Naive thymus-derived CD4-positive, alpha-beta T cell (primary cell): ENCODE measurements at regions of chr1 and their contacts with region 1.

Region 1: GRCh38 chr1:101238681-101239094 is 1.9 kb downstream of the S1PR1 start:
- DNase-seq: peak; percentile 74 to 88 (median 83)
- ATAC-seq: peak; percentile 67
- H3K4me3 ChIP-seq: peak overlapping the region; percentile 88
- H3K4me3 Mint-ChIP-seq: peak overlapping the region; percentile 90 to 100 (median 98)
- H3K27ac ChIP-seq: peak overlapping the region; percentile 94
- H3K27ac Mint-ChIP-seq: peak overlapping the region; percentile 93 to 100 (median 99)
- H3K4me1 ChIP-seq: peaks cover 37 to 42% of the 10 kb centered on the region in 2 donors
- H3K4me1 Mint-ChIP-seq: peaks cover 43 to 68% (median 56%) of the 10 kb centered on the region in 7 donors
- H3K27me3 ChIP-seq: no peaks in the 10 kb centered on the region
- H3K27me3 Mint-ChIP-seq: peaks cover 0 to 4% (median 0%) of the 10 kb centered on the region in 5 donors

Region 2: GRCh38 chr1:100443811-100444571 is 794.7 kb before region 1 on chr1:
- CTCF ChIA-PET with region 1: no interaction called
- POLR2A ChIA-PET with region 1: interaction called, 3 read pairs
- intact Hi-C with region 1: loop called in 1 of 2 experiments (anchors 5 kb)
- DNase-seq: peak in 5 of 9 donors; percentile 31 to 42 (median 36)
- ATAC-seq: peak; percentile 6
- H3K4me3 ChIP-seq: peak overlapping the region; percentile 12
- H3K4me3 Mint-ChIP-seq: peak overlapping the region; percentile 66 to 86 (median 81)
- H3K27ac ChIP-seq: peak overlapping the region; percentile 93
- H3K27ac Mint-ChIP-seq: peak overlapping the region; percentile 92 to 99 (median 98)
- H3K4me1 ChIP-seq: peaks cover 83 to 84% of the 10 kb centered on the region in 2 donors
- H3K4me1 Mint-ChIP-seq: peaks cover 53 to 95% (median 87%) of the 10 kb centered on the region in 7 donors
- H3K27me3 ChIP-seq: no peaks in the 10 kb centered on the region
- H3K27me3 Mint-ChIP-seq: no peaks in the 10 kb centered on the region

Region 3: DNA sequence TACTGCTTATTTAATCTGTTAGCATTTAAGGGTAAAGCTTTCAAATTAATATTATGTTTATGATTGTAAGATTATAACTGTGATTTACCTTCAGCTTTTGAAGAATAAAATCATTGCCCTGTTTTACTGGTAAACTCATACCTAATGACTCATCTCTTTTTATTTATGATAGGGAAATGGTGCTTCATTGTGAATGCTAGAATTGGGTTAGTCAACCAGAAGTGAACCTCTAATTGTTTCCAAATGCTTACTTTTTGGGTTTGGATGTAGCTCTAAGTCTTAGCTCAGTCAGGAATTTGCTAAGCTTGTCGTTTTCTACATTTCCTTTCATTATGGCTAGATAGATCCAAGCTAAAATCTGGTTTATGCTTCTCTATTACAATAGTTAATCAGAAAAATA is 283.4 kb before region 1 on chr1:
- CTCF ChIA-PET with region 1: no interaction called
- POLR2A ChIA-PET with region 1: interaction called, 10 read pairs
- intact Hi-C with region 1: no loop called
- DNase-seq: no peak
- ATAC-seq: no peak
- H3K4me3 ChIP-seq: no peak overlapping the region
- H3K4me3 Mint-ChIP-seq: peak overlapping the region in 2 of 10 donors; percentile 18 to 22
- H3K27ac ChIP-seq: no peak overlapping the region
- H3K27ac Mint-ChIP-seq: no peak overlapping the region
- H3K4me1 ChIP-seq: peaks cover 5 to 6% of the 10 kb centered on the region in 2 donors
- H3K4me1 Mint-ChIP-seq: peaks cover 17 to 74% (median 57%) of the 10 kb centered on the region in 7 donors
- H3K27me3 ChIP-seq: no peaks in the 10 kb centered on the region
- H3K27me3 Mint-ChIP-seq: no peaks in the 10 kb centered on the region

Region 4: DNA sequence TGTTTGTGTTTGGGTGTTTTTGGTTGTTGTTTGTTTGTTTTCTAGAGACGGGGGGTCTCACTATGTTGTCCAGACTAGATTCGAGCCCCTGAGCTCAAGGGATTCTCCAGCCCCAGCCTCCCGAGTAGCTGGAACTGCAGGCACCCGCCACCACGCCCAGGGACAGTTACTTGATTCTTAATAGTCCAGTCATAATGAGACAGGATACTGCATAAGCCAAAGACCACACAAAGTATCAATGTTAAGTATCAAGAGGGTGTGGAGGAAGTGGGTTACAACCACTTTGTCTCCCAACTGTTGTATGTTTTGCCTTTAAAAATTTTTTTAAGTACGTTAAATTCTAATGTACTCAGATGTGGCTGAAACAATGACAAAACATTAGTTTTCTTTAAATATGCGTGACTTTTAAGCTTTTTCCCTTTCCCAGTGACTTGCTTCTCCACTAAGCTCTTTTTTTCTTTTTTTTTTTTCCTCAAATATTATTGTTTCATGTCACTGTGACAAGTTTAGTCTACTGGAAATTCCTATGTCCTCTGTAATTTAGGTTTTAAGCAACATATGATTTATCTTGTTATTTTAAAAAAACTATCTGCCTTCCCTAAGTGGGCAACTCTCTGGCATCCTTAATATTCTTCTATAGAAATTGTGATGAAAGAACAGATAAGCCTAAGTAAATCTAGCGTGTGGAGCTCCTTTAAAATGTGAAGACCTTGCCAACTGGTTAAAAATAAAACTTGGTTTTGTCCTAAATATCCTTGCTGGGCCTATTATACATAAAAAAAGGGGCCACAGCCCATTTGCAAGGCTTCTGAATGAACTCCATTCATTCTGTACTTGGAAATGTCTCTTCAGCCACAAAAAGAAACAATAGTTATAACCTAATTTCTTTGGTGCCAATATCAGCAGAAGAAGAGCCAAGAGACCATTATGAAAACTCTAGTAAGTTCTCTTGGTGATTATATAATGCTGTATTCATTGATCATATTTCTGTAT is 156.9 kb before region 1 on chr1:
- CTCF ChIA-PET with region 1: interaction called, 3 read pairs
- POLR2A ChIA-PET with region 1: interaction called, 4 read pairs
- intact Hi-C with region 1: loop called in 1 of 2 experiments (anchors 2 kb)
- DNase-seq: peak in 7 of 9 donors; percentile 24 to 49 (median 40)
- ATAC-seq: peak; percentile 95
- H3K4me3 ChIP-seq: no peak overlapping the region
- H3K4me3 Mint-ChIP-seq: peak overlapping the region; percentile 42 to 79 (median 72)
- H3K27ac ChIP-seq: no peak overlapping the region
- H3K27ac Mint-ChIP-seq: peak overlapping the region; percentile 69 to 95 (median 82)
- H3K4me1 ChIP-seq: peaks cover 29 to 31% of the 10 kb centered on the region in 2 donors
- H3K4me1 Mint-ChIP-seq: peaks cover 29 to 63% (median 57%) of the 10 kb centered on the region in 7 donors
- H3K27me3 ChIP-seq: no peaks in the 10 kb centered on the region
- H3K27me3 Mint-ChIP-seq: no peaks in the 10 kb centered on the region

Region 5: GRCh38 chr1:101178688-101179491 is 59.8 kb before region 1 on chr1:
- CTCF ChIA-PET with region 1: interaction called, 4 read pairs
- POLR2A ChIA-PET with region 1: interaction called, 24 read pairs
- intact Hi-C with region 1: loop called (anchors 1 kb)
- DNase-seq: peak in 7 of 9 donors; percentile 40 to 61 (median 46)
- ATAC-seq: peak; percentile 78
- H3K4me3 ChIP-seq: peak overlapping the region; percentile 3
- H3K4me3 Mint-ChIP-seq: peak overlapping the region; percentile 63 to 90 (median 80)
- H3K27ac ChIP-seq: peak overlapping the region; percentile 60
- H3K27ac Mint-ChIP-seq: peak overlapping the region; percentile 86 to 98 (median 92)
- H3K4me1 ChIP-seq: peaks cover 12 to 20% of the 10 kb centered on the region in 2 donors
- H3K4me1 Mint-ChIP-seq: peaks cover 24 to 69% (median 51%) of the 10 kb centered on the region in 7 donors
- H3K27me3 ChIP-seq: no peaks in the 10 kb centered on the region
- H3K27me3 Mint-ChIP-seq: no peaks in the 10 kb centered on the region

Region 6: DNA sequence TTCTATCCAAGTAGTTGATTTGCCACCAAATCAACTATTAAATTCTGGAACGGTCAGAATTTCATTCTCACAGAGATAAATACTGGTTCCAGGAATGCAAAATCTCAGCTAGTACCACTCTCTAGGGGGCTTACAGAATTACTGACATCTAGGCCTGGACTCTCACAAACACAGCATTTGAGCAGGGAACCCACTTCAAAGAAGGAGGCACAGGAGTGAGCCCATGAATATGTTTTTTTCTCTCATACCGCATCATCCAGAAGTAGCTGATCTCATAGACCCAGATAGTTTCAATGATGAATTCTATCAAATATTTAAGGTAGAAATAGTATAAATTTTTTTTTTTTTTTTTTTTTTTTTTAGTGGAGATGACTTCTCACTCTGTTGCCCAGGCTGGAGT is 30.2 kb after region 1 on chr1:
- CTCF ChIA-PET with region 1: interaction called, 23 read pairs
- POLR2A ChIA-PET with region 1: interaction called, 101 read pairs
- intact Hi-C with region 1: no loop called
- DNase-seq: no peak
- ATAC-seq: no peak
- H3K4me3 ChIP-seq: no peak overlapping the region
- H3K4me3 Mint-ChIP-seq: no peak overlapping the region
- H3K27ac ChIP-seq: no peak overlapping the region
- H3K27ac Mint-ChIP-seq: peak overlapping the region in 3 of 9 donors; percentile 5 to 28 (median 18)
- H3K4me1 ChIP-seq: peaks cover 36 to 41% of the 10 kb centered on the region in 2 donors
- H3K4me1 Mint-ChIP-seq: peaks cover 29 to 61% (median 55%) of the 10 kb centered on the region in 7 donors
- H3K27me3 ChIP-seq: no peaks in the 10 kb centered on the region
- H3K27me3 Mint-ChIP-seq: no peaks in the 10 kb centered on the region